Sigmoid colon (tissue), 7 donors: ENCODE measurements at regions of chr12 and their contacts with region 1.

Region 1: GRCh38 chr12:20501960-20502359 is 133.6 kb downstream of the PDE3A start:
- DNase-seq: no peak
- H3K4me3 ChIP-seq: no peak overlapping the region
- H3K27ac ChIP-seq: no peak overlapping the region
- H3K4me1 ChIP-seq: peaks cover 0 to 28% (median 8%) of the 10 kb centered on the region in 4 donors
- H3K27me3 ChIP-seq: no peaks in the 10 kb centered on the region
- CTCF ChIP-seq: no peak
- EP300 ChIP-seq: no peak
- POLR2A ChIP-seq: no peak

Region 2: GRCh38 chr12:20523658-20524057 is 21.7 kb after region 1 on chr12:
- intact Hi-C with region 1: loop called (anchors 1 kb)
- DNase-seq: no peak
- H3K4me3 ChIP-seq: no peak overlapping the region
- H3K27ac ChIP-seq: peak overlapping the region in 2 of 4 donors; percentile 18 to 22
- H3K4me1 ChIP-seq: peaks cover 0 to 71% (median 29%) of the 10 kb centered on the region in 4 donors
- H3K27me3 ChIP-seq: no peaks in the 10 kb centered on the region
- CTCF ChIP-seq: no peak
- EP300 ChIP-seq: no peak
- POLR2A ChIP-seq: no peak

Region 3: DNA sequence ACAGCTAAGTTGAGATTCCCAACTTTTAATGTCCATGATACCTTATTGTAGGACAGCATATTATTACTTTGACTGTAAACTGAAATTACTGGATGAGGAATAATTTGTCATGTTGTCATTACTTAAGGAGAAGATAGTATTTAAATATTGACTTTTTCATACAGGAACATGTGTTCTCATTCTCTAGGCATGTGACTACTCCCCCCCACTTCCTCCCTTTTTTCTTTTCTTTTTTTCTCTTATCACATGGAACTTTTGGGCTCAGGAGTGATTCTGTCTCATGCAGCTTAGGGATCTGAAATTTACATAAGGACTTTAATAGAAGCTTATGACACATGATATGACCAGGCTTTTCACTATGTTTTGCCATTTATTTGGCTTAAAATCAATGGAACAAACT is 65.5 kb after region 1 on chr12:
- intact Hi-C with region 1: no loop called
- DNase-seq: no peak
- H3K4me3 ChIP-seq: no peak overlapping the region
- H3K27ac ChIP-seq: no peak overlapping the region
- H3K4me1 ChIP-seq: peaks cover 0 to 30% (median 17%) of the 10 kb centered on the region in 4 donors
- H3K27me3 ChIP-seq: no peaks in the 10 kb centered on the region
- CTCF ChIP-seq: no peak
- EP300 ChIP-seq: no peak
- POLR2A ChIP-seq: no peak